ENCODE measurements at regions of chr18 and their contacts with region 1.

Region 1: DNA sequence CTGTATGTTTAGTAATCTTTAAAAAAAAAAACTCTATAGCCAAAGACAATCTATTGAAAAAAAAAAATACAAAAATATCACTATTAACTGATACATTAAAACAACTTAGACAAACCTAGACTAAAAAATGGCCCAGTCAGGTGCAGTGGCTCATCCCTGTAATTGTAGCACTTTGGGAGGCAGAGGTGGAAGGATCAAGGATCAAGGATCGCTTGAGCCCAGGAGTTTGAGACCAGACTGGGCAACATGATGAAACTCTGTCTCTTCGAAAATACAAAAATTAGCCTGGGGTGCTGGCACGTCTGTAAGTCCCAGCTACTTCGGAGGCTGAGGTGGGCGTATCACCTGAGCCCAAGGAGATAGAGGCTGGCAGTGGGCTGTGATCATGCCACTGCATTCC is 16.1 kb downstream of the ESCO1 start:
- DNase-seq: no peak
- ATAC-seq: no peak
- H3K4me3 ChIP-seq: no peak overlapping the region
- H3K27ac ChIP-seq: no peak overlapping the region
- H3K4me1 ChIP-seq: no peaks in the 10 kb centered on the region
- H3K27me3 ChIP-seq: no peaks in the 10 kb centered on the region
- CTCF ChIP-seq: no peak

Region 2: GRCh38 chr18:21452796-21453510 is 131.4 kb before region 1 on chr18:
- CTCF ChIA-PET with region 1: no interaction called
- POLR2A ChIA-PET with region 1: no interaction called
- intact Hi-C with region 1: no loop called
- DNase-seq: no peak
- ATAC-seq: peak; percentile 73
- H3K4me3 ChIP-seq: no peak overlapping the region
- H3K27ac ChIP-seq: peak overlapping the region; percentile 39
- H3K4me1 ChIP-seq: peaks cover 15% of the 10 kb centered on the region
- H3K27me3 ChIP-seq: no peaks in the 10 kb centered on the region
- CTCF ChIP-seq: no peak

Region 3: DNA sequence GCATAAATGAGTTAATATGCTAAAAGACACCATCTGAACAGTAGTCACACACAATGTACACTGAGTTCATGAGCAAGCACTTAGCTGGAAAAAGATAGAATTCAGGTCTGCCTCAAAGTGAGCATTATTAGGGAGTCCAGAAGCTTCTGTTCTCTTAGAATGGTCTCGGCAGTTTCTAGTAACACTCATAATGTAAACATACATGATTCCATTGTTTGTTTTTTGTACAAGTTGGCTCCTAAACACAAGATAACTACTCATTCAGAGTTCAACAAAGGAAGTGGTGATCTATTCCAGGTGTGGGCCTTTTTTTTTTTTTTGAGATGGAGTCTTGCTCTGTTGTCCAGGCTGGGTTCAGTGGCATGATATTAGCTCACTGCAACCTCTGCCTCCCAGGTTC is 50.1 kb before region 1 on chr18:
- CTCF ChIA-PET with region 1: no interaction called
- POLR2A ChIA-PET with region 1: no interaction called
- intact Hi-C with region 1: loop called (anchors 5 kb)
- DNase-seq: peak; percentile 50
- ATAC-seq: peak; percentile 91
- H3K4me3 ChIP-seq: no peak overlapping the region
- H3K27ac ChIP-seq: peak overlapping the region; percentile 11; the same call in 1 of the 2 replicates
- H3K4me1 ChIP-seq: peaks cover 8% of the 10 kb centered on the region
- H3K27me3 ChIP-seq: no peaks in the 10 kb centered on the region
- CTCF ChIP-seq: no peak

Region 4: GRCh38 chr18:21557607-21558253 is 26.7 kb before region 1 on chr18:
- CTCF ChIA-PET with region 1: no interaction called
- POLR2A ChIA-PET with region 1: no interaction called
- intact Hi-C with region 1: no loop called
- DNase-seq: no peak
- ATAC-seq: no peak
- H3K4me3 ChIP-seq: no peak overlapping the region
- H3K27ac ChIP-seq: no peak overlapping the region
- H3K4me1 ChIP-seq: no peaks in the 10 kb centered on the region
- H3K27me3 ChIP-seq: no peaks in the 10 kb centered on the region
- CTCF ChIP-seq: no peak

Region 5: DNA sequence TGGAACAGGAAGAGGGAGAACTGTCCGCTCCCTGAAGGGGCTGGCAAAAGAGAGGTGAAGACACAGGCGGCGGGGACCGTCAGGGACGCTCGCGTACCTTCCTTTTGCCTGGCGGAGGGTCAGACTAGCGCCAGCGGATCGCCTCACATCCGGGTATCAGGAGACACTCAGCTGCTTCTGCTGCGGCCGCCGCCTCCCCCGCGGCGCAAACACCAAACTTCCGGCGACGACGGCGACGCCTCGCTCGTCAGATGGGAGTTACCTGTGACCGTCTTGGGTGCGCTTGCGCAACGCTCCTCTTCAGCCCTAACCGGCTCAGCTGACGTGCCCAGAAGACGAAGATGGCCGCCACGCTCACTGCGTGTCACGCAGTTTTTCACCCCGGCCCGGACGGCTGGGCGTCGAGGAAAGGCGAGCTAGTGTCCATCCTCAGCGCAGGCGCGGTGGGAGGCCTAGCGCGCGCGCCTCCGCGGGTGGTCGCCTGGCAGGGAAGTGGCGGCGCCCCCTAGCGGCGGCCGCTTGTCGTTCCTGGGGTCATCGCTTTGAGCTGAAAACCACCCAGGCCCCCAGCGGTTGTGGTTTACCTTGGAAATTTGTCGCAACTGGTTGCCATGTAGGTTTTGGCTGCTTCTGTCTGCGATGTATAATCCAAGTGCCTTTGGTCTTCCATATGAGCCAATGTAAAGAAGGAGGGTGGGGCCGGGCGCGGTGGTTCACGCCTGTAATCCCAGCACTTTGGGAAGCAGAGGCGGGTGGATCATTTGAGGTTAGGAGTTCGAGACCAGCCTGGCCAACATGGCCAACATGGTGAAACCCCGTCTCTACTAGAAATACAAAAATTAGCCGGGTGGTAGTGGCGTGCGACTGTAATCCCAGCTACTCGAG is 16.4 kb after region 1 on chr18 and contains the start of gene ESCO1:
- CTCF ChIA-PET with region 1: interaction called, 4 read pairs
- POLR2A ChIA-PET with region 1: no interaction called
- intact Hi-C with region 1: loop called (anchors 2 kb)
- DNase-seq: peak; percentile 98
- ATAC-seq: peak; percentile 91
- H3K4me3 ChIP-seq: peak within 1 kb of the TSS; percentile 99
- H3K27ac ChIP-seq: peak within 1 kb of the TSS; percentile 94
- H3K4me1 ChIP-seq: peaks cover 14% of the 10 kb centered on the region
- H3K27me3 ChIP-seq: no peaks in the 10 kb centered on the region
- CTCF ChIP-seq: peak; percentile 80
- total RNA-seq, gene ESCO1: 17.0 and 17.5 TPM in 2 replicates

Measured in PC-3 (cell line).